Left cardiac atrium (tissue), 4 donors: ENCODE measurements at regions of chr1 and their contacts with region 1.

Region 1: DNA sequence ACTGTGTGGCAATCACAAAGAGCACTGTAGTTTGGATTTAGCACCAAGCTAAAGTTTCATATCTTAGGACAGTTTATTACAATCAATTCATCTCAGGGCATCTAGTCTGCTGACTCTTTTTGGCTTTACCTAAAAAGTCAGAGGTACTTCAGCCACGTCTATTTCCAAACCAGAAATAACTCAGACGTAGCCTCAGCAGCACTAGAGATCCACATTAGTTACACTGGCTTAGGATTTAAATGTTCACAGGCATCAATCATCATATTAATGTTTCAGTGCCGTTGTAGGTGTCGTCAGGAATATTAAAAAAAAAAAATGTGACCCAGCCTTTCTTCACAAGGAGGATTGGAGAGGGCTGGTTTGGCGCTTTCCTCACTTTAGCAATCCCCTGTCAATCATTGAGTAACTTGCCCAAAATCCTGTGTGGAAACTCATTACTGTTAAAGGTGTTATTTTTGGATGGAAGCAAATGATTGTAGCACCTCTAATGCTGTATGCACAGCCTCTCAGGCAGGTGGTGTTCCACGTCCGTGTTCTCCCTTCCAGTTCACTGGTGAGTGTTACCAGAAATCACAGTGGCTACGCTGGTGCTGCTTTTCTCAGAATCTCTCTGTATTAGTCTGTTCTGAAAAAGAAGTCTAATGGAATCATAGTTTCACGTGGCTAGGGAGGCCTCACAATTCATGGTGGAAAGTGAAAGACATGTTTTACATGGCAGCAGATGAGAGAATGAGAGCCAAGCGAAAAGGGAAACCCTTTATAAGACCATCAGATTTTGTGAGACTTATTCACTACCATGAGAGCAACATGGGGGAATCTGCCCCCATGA is 45.4 kb downstream of the NEK7 start:
- DNase-seq: no peak
- ATAC-seq: no peak

Region 2: GRCh38 chr1:198157241-198157846 is 44.8 kb before region 1 on chr1:
- intact Hi-C with region 1: loop called (anchors 5 to 10 kb)
- DNase-seq: peak; percentile 91
- ATAC-seq: peak; percentile 71 to 74

Region 3: GRCh38 chr1:198265073-198265661 is 63.0 kb after region 1 on chr1:
- intact Hi-C with region 1: loop called in 1 of 2 experiments (anchors 5 kb)
- DNase-seq: no peak
- ATAC-seq: peak; percentile 83 to 88

Region 4: DNA sequence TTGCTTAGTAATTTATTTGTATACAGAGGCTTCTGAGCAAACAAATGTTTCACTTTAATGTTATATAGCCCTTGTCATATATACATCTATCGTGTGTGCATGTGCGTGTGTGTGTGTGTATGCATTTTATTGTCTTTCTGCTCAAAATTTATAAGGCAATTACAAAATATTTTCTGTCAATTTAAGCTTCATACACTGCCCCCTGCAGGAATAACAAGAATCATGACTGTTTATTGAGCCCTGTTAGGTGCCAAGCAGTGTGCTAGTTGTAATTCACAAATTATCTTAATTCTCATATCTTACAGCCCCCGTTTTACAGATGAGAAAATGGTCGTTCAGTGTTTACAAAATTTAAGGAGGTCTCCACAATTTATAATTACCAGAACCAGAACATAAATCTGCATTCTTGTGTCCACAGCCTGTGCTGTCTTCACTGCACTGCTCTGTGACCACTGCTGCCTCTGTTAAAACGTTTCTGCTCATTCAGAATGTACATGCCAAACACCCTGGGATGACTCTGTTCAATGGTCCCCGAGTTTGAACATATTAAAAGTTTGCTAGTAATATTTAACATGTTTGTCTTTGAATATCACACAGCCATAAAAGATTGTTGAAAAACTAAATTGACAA is 157.0 kb after region 1 on chr1:
- intact Hi-C with region 1: loop called in 1 of 2 experiments (anchors 10 kb)
- DNase-seq: no peak
- ATAC-seq: no peak

Region 5: DNA sequence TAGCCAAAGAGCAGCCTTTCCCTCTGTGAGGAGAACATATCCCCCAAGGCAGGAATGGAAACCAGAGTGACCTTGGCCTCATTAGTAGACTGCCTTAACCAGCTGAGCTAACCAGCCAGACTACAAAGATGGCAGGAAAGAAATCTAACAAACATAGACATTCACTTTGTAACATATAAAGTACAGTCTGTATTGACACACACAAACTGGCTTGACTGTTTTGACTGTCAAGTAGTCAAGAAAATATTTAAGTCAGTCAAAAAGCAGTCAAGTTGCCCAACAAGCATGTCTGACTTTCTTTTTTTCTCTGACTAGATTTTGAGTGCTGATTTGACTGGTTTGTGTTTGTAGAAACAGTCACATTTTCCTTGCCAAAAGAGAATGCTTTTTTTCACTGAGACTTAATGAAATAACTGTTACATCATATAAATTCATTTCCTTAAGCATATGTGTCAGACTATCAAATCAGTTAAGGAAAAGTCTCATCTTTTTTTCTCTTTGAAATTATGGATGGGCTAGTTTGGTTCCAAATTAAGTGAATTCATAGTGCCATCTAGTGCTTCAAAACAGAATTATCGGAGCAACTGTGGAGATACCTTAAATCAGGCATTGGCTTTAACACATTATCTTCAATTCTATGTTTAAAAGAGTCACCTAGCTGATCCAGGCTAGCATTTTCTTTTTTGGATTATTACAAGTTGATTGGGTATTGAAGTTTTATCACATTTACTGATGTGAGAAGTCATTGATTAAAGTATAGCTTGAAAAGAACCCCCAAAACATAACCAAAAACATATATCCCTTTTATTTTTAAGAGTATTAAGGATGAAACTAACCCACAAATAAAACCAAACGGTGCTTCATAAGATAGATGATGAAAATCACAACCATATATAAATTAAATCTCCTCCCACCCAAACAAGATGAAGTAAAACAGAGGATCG is 263.3 kb after region 1 on chr1:
- intact Hi-C with region 1: loop called in 1 of 2 experiments (anchors 5 kb)
- DNase-seq: no peak
- ATAC-seq: peak in 1 of 2 donors; percentile 73